Cardiac septum (tissue), 1 donor: ENCODE measurements at regions of chr2 and their contacts with region 1.

Region 1: GRCh38 chr2:38115216-38116032 is 39.5 kb upstream of the CYP1B1 start:
- DNase-seq: peak; percentile 90

Region 2: GRCh38 chr2:37982147-37982582 is 133.3 kb before region 1 on chr2:
- intact Hi-C with region 1: loop called (anchors 5 kb)
- DNase-seq: no peak

Region 3: DNA sequence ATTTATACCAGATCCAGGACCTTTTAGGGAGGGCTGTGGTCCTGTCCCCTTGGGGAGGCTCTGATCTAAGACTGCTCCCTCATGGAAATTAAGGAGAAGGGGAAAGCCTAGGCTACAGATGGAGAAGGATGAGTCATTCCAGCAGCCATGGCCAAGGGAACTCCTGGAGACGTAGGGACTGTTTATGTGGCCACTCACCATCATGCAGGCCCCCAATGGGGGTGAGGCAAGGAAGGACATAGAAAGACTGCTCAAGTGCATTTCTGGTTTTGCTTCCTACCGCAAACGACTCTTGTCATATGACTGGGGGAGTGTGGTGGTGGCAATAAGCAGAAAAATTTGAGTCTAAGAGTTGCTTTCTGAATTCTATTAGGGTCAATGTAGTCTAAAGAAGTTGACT is 14.6 kb after region 1 on chr2:
- intact Hi-C with region 1: no loop called
- DNase-seq: no peak

Region 4: GRCh38 chr2:38159597-38159996 is 44.2 kb after region 1 on chr2:
- intact Hi-C with region 1: loop called (anchors 5 kb)
- DNase-seq: no peak